Lower leg skin (tissue), 4 donors: ENCODE measurements at regions of chr9 and their contacts with region 1.

Region 1: GRCh38 chr9:114082017-114082762 is 4.1 kb upstream of the AMBP start:
- DNase-seq: peak; percentile 90 to 97
- H3K4me3 ChIP-seq: no peak overlapping the region
- CTCF ChIP-seq: peak in 1 of 3 donors; percentile 83
- POLR2A ChIP-seq: no peak

Region 2: GRCh38 chr9:114117996-114118830 is 36.0 kb after region 1 on chr9:
- intact Hi-C with region 1: no loop called
- DNase-seq: peak in 1 of 2 donors; percentile 82
- H3K4me3 ChIP-seq: no peak overlapping the region
- CTCF ChIP-seq: no peak
- POLR2A ChIP-seq: no peak

Region 3: GRCh38 chr9:114291064-114291474 is 208.9 kb after region 1 on chr9:
- intact Hi-C with region 1: loop called (anchors 10 kb)
- DNase-seq: peak; percentile 62 to 95
- H3K4me3 ChIP-seq: no peak overlapping the region
- CTCF ChIP-seq: peak in 1 of 3 donors; percentile 88
- POLR2A ChIP-seq: no peak